A673 (cell line): ENCODE measurements at regions of chr7 and their contacts with region 1.

Region 1: DNA sequence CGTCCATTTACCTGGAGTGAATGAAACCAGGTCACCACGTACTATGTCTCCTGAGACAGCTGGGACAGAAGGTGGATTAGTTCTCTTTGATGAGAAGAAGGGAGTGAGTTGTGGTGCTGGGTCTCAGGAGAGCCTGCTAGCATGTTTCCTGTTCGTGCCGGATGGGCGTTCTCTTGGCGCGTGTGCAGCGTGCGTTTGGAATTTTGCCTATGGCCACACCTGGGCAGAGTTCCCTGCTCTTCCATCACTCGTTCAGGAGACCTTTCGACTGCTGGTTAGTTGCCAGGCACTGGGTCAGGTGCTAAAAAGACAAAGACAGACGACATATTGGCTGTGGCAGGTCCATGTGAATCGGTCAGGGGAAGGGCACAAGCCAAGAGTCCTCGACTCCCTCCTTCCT is 90.3 kb downstream of the TRRAP start:
- DNase-seq: no peak
- H3K4me3 ChIP-seq: no peak overlapping the region
- H3K27ac ChIP-seq: no peak overlapping the region
- H3K4me1 ChIP-seq: no peaks in the 10 kb centered on the region
- H3K27me3 ChIP-seq: no peaks in the 10 kb centered on the region
- CTCF ChIP-seq: no peak

Region 2: DNA sequence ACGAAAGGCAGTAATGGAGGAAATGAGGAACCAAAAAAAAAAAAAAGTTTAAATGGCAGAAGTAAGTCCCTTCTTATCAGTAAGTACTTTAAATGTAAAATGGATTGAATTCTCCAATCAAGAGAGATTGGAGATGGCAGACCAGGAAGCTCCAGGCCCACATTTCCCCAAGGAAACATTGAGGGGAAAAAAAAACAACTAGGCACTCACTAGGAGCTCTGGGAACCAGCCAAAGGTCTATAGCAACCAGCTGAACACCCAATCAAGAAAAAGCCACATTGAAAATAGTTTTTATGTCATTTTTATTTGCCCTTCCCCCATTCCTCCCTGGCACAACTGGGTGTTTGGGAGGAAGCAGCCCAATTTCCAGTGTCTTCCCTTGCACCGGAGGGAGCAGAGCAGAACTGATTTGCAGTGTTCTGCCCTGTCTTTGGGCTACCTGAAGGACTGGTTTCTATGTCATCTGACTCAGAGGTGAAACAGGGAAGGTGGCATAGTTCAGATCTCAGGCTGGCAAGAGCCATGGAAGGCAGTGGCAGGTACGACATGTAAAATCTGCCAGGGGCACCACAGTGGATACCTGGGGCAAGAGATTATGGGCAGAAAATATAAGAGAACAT is 53.4 kb after region 1 on chr7:
- CTCF ChIA-PET with region 1: no interaction called
- POLR2A ChIA-PET with region 1: no interaction called
- intact Hi-C with region 1: loop called (anchors 10 kb)
- DNase-seq: peak; percentile 72
- H3K4me3 ChIP-seq: no peak overlapping the region
- H3K27ac ChIP-seq: peak overlapping the region; percentile 22
- H3K4me1 ChIP-seq: peaks cover 14% of the 10 kb centered on the region
- H3K27me3 ChIP-seq: no peaks in the 10 kb centered on the region
- CTCF ChIP-seq: no peak

Region 3: DNA sequence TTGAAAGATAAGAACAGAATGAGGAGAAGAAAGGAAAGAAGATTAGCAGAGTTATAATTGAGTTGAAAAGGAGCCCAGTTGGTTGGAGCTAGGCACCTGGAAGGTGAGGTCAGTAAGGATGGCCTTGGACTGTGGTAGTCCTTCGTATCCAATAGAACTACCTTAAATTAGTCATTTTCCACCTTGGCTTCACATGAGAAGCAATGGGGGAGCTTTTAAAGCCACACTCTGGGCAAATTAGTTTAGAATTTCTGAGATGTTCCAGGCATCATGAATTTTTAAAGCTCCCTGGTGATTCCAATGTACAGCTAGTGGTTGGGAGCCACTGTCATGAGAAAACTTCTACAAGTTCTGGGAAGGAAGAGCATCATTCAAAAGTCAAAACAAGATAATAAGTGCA is 738.5 kb after region 1 on chr7:
- CTCF ChIA-PET with region 1: no interaction called
- POLR2A ChIA-PET with region 1: no interaction called
- intact Hi-C with region 1: no loop called
- DNase-seq: no peak
- H3K4me3 ChIP-seq: no peak overlapping the region
- H3K27ac ChIP-seq: no peak overlapping the region
- H3K4me1 ChIP-seq: no peaks in the 10 kb centered on the region
- H3K27me3 ChIP-seq: no peaks in the 10 kb centered on the region
- CTCF ChIP-seq: no peak